Right ventricle myocardium inferior (tissue), 1 donor: ENCODE measurements at regions of chr13 and their contacts with region 1.

Region 1: GRCh38 chr13:96229356-96229755 is 139.4 kb downstream of the HS6ST3 start:
- DNase-seq: no peak
- ATAC-seq: no peak

Region 2: GRCh38 chr13:96308568-96308967 is 79.2 kb after region 1 on chr13:
- intact Hi-C with region 1: no loop called
- DNase-seq: no peak
- ATAC-seq: no peak

Region 3: GRCh38 chr13:96473526-96474180 is 244.3 kb after region 1 on chr13:
- intact Hi-C with region 1: loop called (anchors 10 kb)
- DNase-seq: no peak
- ATAC-seq: no peak